Activated CD4-positive, alpha-beta T cell treated with anti-CD3 and anti-CD28 coated beads, Interleukin-2, amount 10 ng/mL, durations not matched to agents 24 days and 14 days (primary cell): ENCODE measurements at regions of chr19 and their contacts with region 1.

Region 1: DNA sequence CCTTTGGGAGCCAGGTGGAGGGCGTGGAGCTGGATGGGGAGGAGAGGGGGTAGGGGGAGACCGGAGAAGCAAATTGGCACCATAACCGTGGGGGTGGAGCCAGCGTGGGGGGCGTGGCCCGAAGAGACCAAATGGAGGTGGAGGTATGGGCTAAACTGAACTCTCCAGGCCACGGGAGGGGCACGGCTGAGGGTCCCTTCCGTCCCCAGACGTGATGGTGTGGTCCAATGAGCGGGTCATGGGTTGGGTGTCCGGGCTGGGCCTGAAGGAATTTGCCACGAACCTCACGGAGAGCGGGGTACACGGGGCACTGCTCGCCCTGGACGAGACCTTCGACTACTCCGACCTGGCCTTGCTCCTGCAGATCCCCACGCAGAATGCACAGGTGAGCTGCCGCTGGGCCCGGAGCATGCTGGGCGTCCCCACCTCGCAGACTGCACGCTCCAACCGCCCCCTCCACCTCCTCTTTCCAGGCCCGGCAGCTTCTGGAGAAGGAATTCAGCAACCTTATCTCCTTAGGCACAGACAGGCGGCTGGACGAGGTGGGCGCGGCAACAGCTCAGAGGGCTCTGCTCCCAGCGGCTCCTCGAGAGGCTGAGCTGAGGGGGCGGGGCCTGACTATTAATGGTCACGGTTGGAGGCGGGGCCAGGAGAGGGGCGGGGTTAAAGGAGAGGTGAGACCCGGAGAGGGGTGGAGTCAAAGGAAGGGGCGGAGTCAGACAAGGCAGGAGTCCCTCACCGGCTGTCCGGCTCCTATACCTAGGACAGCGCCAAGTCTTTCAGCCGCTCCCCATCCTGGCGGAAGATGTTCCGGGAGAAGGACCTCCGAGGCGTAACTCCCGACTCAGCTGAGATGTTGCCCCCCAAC is 6.2 kb downstream of the HRC start:
- DNase-seq: peak; percentile 94
- H3K4me3 Mint-ChIP-seq: peak overlapping the region; percentile 90
- H3K27ac Mint-ChIP-seq: no peak overlapping the region
- H3K4me1 Mint-ChIP-seq: peaks cover 23% of the 10 kb centered on the region
- H3K27me3 Mint-ChIP-seq: peaks cover 59% of the 10 kb centered on the region

Region 2: DNA sequence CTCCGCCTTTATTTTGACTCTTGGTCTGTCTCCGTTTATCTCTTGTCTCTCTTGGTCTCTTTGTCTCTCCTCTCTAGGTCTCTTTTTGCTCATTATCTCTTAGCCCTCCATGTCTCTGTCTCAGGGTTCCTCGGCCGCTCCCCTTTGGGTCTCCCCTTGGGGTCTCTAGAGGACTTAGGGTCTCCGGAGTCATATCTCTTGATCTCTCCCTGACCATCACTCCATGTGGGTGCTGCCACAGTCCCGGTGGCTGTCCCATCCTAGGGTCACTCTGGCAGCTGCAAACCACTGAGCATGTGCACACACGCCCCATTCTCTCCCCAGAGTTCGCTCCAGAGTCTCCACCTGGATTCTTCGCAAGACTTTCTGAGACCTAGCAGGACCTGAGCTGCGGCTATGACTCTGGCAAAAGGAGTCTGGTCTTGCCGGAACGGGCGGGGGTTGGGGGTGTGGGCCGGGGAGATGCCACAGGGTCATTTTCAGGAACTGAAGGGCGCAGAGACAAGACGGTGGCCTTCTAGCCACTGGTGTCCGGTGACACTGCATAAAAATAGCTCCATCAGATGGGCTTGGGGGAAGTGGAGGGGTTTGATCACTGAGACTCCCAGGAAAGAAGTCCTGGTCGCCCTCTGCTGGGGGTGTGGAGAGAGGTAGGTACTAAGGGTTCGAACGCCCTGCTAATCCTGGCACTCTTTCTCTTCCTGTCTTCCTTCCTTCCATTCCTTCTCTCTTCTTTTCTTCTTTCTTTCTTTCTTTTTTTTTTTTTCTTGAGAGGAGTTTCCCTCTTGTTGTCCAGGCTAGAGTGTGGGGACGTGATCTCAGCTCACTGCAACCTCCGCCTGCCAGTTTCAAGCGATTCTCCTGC is 75.3 kb before region 1 on chr19:
- intact Hi-C with region 1: loop called (anchors 5 kb)
- DNase-seq: no peak
- H3K4me3 Mint-ChIP-seq: peak overlapping the region; percentile 60
- H3K27ac Mint-ChIP-seq: no peak overlapping the region
- H3K4me1 Mint-ChIP-seq: peaks cover 6% of the 10 kb centered on the region
- H3K27me3 Mint-ChIP-seq: peaks cover 41% of the 10 kb centered on the region

Region 3: GRCh38 chr19:49085020-49085867 is 63.8 kb before region 1 on chr19 and contains the start of gene SNRNP70:
- intact Hi-C with region 1: no loop called
- DNase-seq: peak; percentile 99
- H3K4me3 Mint-ChIP-seq: peak within 1 kb of the TSS; percentile 98
- H3K27ac Mint-ChIP-seq: peak within 1 kb of the TSS; percentile 86
- H3K4me1 Mint-ChIP-seq: peaks cover 28% of the 10 kb centered on the region
- H3K27me3 Mint-ChIP-seq: peaks cover 4% of the 10 kb centered on the region
- total RNA-seq, gene SNRNP70: 270 and 281 TPM in 2 replicates

Region 4: DNA sequence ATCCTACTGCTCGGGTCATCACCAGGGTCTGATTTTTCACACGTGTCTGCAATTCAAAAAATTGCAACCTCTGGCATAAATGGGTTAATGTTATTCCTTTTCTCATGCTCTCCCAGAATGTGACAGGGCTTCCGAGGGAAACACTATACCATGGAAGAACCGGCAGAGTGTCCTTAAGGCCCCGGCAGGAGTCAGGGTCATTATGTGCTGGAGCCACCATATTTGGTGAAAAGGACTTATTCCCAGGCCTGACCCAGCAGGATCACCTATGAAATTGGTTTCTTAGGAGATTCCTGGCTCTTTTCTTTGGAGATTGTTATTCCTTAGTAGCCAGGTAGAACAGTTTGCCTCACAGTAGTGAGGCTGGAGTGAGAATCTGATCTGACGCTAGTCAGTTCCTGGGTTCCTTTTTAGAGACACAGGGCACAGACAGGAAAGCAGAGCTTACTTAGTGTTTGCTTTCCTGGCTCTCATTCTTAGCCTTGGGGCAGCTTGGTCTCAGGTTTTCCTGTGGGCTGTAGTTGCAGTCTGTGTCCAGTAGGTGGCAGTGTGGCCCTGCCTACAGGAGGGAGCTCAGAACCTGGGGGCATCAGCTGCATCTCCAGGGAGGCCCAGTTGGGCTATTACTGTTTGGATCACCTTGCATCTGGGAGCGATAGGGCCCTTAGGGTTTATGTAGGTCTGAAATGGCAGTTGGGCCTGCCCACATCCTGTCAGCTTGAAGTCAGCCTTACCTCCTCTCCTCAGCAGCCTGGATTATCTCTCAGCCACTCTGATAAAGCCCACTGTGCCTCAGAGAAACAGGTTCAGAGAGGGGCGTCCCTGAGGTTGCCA is 51.3 kb before region 1 on chr19:
- intact Hi-C with region 1: loop called (anchors 1 kb)
- DNase-seq: peak; percentile 93
- H3K4me3 Mint-ChIP-seq: no peak overlapping the region
- H3K27ac Mint-ChIP-seq: peak overlapping the region; percentile 20
- H3K4me1 Mint-ChIP-seq: peaks cover 6% of the 10 kb centered on the region
- H3K27me3 Mint-ChIP-seq: no peaks in the 10 kb centered on the region

Region 5: DNA sequence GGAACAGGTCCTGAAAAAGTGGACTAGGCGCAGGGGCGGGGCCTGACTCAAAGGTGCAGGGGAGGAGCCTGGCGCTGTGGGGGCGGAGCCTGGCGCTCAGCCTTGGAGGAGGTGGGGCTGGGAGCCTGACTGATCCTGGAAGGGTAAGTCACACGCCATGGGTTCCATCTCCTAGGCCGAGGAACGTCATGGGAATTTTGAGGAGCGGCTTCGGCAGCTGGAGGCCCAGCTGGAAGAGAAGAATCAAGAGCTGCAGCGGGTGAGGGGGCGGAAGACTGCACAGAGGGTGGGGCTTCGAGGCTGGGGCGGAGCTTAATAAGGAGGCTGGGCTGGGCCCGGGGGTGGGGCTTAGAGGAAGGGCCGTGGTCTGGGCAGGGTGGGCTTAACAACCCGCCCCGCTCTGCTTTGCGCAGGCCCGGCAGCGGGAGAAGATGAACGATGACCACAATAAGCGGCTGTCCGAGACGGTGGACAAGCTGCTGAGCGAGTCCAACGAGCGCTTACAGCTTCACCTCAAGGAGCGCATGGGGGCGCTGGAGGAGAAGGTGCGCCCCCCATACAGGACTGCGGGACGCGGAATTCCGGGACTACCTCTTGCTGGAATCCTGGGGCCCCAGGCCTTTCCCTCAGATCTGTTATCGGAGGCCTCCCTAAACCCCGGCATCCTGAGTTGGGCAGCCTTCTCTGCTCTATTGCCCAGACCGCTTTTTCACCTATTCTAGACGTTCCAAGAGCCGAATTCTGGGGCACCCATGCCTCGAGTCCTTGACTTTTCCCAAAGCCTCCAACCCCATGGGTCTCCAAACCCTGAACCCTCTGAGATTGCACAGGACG is 15.2 kb before region 1 on chr19:
- intact Hi-C with region 1: loop called (anchors 2 kb)
- DNase-seq: peak; percentile 90
- H3K4me3 Mint-ChIP-seq: peak overlapping the region; percentile 82
- H3K27ac Mint-ChIP-seq: no peak overlapping the region
- H3K4me1 Mint-ChIP-seq: peaks cover 11% of the 10 kb centered on the region
- H3K27me3 Mint-ChIP-seq: peaks cover 3% of the 10 kb centered on the region

Region 6: DNA sequence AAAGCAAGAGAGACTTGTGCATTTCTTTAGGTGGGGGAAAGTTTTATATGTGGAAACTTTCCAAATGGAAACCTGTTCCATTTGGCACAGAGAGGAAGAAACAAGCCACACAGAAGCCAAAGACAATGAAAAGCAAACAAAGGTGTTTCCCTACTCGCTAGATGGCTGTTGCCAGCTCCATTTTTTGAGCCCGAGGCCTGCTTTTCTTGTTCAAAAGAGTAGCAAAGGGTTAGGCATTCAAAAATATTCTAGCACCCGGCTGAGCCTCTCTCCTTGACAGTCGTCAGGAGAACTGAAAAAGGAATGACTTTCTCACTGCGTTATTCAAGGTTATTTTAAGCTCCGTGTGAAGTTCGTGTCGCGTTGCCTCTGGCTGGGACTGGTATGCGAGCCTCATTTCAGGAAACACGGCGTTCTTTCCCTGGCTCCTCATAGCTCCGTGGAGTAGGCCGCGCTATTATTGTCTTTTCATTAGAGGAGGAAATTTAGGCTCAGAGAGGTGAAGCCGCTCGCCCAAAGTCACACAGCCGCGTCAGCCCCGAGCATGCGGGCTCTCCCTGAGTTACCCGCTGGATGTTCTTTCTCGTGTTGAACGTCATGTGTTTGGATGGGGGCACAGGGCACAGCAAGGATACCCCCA is 16.2 kb after region 1 on chr19:
- intact Hi-C with region 1: no loop called
- DNase-seq: no peak
- H3K4me3 Mint-ChIP-seq: no peak overlapping the region
- H3K27ac Mint-ChIP-seq: no peak overlapping the region
- H3K4me1 Mint-ChIP-seq: no peaks in the 10 kb centered on the region
- H3K27me3 Mint-ChIP-seq: peaks cover 8% of the 10 kb centered on the region

Region 7: DNA sequence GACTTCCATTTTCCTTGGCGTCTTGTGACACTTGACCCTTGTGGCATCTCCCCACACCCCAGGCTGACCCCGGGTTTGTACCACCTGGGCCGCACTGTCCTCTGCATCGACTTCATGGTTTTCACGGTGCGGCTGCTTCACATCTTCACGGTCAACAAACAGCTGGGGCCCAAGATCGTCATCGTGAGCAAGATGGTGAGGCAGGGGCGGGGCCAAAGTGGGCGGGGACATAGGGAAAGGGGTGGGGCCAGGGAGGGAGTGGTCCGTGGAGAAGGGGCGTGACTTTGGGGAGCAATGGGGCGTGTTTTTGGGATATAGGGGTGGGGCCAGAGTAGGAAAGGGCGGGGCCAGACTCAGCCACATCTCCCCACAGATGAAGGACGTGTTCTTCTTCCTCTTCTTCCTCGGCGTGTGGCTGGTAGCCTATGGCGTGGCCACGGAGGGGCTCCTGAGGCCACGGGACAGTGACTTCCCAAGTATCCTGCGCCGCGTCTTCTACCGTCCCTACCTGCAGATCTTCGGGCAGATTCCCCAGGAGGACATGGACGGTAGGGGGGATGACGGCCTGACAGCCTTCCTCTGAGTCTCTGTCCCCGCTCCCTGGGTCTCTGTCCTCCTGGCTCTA is 51.3 kb after region 1 on chr19:
- intact Hi-C with region 1: loop called (anchors 2 kb)
- DNase-seq: no peak
- H3K4me3 Mint-ChIP-seq: no peak overlapping the region
- H3K27ac Mint-ChIP-seq: no peak overlapping the region
- H3K4me1 Mint-ChIP-seq: peaks cover 4% of the 10 kb centered on the region
- H3K27me3 Mint-ChIP-seq: peaks cover 3% of the 10 kb centered on the region